IMR-90 (cell line): ENCODE measurements at regions of chr3 and their contacts with region 1.

Region 1: DNA sequence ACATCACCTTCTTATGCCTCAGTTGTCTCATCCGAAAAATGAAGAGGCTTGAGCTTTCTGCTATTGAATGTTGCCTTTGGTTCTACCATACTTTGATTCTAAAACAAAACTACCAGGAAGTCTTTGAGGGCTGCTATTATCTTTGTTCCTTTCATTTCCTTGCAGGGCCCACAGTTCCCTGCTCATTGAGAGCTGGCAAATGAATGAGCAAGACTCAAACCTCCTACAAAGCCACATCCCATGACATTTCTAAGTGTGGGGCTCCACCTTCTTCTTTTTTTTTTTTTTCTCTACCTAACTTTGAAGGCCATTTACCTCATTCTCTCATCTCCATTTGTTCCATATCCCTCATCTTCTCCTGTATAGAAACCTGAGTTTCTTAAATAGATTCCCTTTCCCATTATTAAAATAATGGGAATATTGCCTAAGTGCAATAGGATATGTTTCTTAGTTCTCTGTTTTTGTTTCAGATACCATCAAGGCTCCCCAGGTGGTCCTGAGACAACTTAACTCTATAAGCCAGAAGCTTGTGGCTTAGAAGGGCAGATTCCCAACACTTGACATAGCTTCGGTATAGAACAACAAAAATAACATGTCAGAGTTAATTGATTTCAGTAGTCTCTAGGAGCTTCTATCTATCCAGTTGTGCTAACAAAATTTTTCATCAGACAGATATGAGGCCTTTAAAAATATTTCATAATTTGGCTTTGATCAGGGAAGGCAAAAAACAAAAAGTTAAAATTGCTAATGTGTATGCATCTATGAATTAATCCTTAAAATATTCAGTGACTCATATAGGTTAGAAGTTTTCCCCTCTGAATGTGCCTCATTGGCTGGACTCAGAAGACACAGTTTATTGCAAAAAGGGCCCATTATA is 951.6 kb downstream of the TUSC7 start:
- DNase-seq: peak; percentile 80
- ATAC-seq: peak; percentile 94
- H3K4me3 ChIP-seq: no peak overlapping the region
- H3K27ac ChIP-seq: peak overlapping the region; percentile 73
- H3K4me1 ChIP-seq: peaks cover 11% of the 10 kb centered on the region
- H3K27me3 ChIP-seq: no peaks in the 10 kb centered on the region
- CTCF ChIP-seq: no peak
- POLR2A ChIP-seq: no peak
- RAD21 ChIP-seq: no peak

Region 2: GRCh38 chr3:117510396-117510795 is 150.8 kb before region 1 on chr3:
- CTCF ChIA-PET with region 1: no interaction called
- POLR2A ChIA-PET with region 1: interaction called, 11 read pairs
- dilution Hi-C with region 1: no loop called
- in situ Hi-C with region 1: no loop called
- intact Hi-C with region 1: no loop called
- DNase-seq: peak; percentile 59
- ATAC-seq: peak; percentile 77
- H3K4me3 ChIP-seq: no peak overlapping the region
- H3K27ac ChIP-seq: no peak overlapping the region
- H3K4me1 ChIP-seq: no peaks in the 10 kb centered on the region
- H3K27me3 ChIP-seq: no peaks in the 10 kb centered on the region
- CTCF ChIP-seq: no peak
- POLR2A ChIP-seq: no peak
- RAD21 ChIP-seq: no peak

Region 3: DNA sequence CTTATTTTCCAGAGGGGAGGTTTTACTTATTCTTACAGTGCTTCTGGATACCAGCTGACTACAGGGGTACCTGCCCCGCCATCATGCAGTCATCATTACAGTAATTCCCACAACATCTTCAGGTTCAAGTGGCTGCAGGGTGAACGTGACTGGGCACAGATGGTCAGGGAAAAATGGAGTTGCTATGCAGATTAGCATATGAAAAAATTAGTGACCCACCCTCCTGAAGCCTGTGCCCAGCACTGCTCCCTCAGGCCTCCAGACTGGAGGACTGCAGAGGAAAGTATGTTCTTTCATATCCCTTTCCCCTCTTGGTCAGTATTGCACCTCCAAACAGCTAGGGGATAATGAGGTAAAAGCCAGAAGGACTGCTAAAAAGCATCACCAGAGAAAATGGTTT is 13.7 kb before region 1 on chr3:
- CTCF ChIA-PET with region 1: interaction called, 3 read pairs
- POLR2A ChIA-PET with region 1: interaction called, 27 read pairs
- dilution Hi-C with region 1: no loop called
- in situ Hi-C with region 1: no loop called
- intact Hi-C with region 1: no loop called
- DNase-seq: no peak
- ATAC-seq: no peak
- H3K4me3 ChIP-seq: no peak overlapping the region
- H3K27ac ChIP-seq: no peak overlapping the region
- H3K4me1 ChIP-seq: peaks cover 7% of the 10 kb centered on the region
- H3K27me3 ChIP-seq: no peaks in the 10 kb centered on the region
- CTCF ChIP-seq: no peak
- POLR2A ChIP-seq: no peak
- RAD21 ChIP-seq: no peak